Activated T-helper 2 cell treated with anti-CD3 and anti-CD28 coated beads, Interferon-gamma antibody, Interleukin-2, Interleukin-4, amounts not matched to agents 10 μg/mL and 5 μg/mL and 100 μg/mL, durations not matched to agents 14 hours and 24 hours and 36 hours (primary cell): ENCODE measurements at regions of chr20 and their contacts with region 1.

Region 1: GRCh38 chr20:3156811-3157619 is 2.6 kb downstream of the FASTKD5 start:
- DNase-seq: no peak
- H3K4me3 Mint-ChIP-seq: peak overlapping the region; percentile 76
- H3K27ac Mint-ChIP-seq: peak overlapping the region; percentile 85
- H3K4me1 Mint-ChIP-seq: peaks cover 37% of the 10 kb centered on the region
- H3K27me3 Mint-ChIP-seq: no peaks in the 10 kb centered on the region

Region 2: DNA sequence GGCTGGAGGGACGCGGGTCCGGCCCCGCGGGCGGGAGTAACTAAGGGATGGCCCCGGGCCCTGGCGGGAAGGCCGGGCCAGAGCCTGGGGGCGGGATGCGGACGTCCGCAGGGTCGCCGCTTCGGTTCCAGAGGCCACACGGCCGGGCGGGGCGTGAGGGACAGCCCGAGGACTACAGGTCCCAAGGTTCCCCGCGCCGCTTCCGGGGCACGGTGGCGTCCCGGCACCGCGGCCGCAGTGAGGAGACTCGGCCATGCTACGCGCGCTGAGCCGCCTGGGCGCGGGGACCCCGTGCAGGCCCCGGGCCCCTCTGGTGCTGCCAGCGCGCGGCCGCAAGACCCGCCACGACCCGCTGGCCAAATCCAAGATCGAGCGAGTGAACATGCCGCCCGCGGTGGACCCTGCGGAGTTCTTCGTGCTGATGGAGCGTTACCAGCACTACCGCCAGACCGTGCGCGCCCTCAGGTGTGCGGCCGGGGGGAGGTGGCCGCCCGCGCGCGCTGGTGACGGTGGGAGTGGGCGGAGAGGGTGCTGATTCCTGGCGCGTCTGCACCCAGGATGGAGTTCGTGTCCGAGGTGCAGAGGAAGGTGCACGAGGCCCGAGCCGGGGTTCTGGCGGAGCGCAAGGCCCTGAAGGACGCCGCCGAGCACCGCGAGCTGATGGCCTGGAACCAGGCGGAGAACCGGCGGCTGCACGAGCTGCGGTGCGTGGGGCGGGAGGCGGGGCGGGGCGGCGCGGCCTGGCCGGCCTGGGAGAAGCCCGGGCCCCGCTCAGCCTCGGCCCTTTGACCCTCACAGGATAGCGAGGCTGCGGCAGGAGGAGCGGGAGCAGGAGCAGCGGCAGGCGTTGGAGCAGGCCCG is 111.0 kb before region 1 on chr20 and contains the start of gene MRPS26:
- intact Hi-C with region 1: loop called (anchors 5 kb)
- DNase-seq: peak; percentile 81
- H3K4me3 Mint-ChIP-seq: peak within 1 kb of the TSS; percentile 86
- H3K27ac Mint-ChIP-seq: peak within 1 kb of the TSS; percentile 81
- H3K4me1 Mint-ChIP-seq: peaks cover 13% of the 10 kb centered on the region
- H3K27me3 Mint-ChIP-seq: no peaks in the 10 kb centered on the region
- total RNA-seq, gene MRPS26: 143 and 148 TPM in 2 replicates

Region 3: GRCh38 chr20:3121271-3121911 is 35.6 kb before region 1 on chr20:
- intact Hi-C with region 1: loop called (anchors 5 kb)
- DNase-seq: no peak
- H3K4me3 Mint-ChIP-seq: peak overlapping the region; percentile 9
- H3K27ac Mint-ChIP-seq: peak overlapping the region; percentile 52
- H3K4me1 Mint-ChIP-seq: peaks cover 22% of the 10 kb centered on the region
- H3K27me3 Mint-ChIP-seq: no peaks in the 10 kb centered on the region

Region 4: GRCh38 chr20:3173610-3174441 is 16.8 kb after region 1 on chr20:
- intact Hi-C with region 1: loop called (anchors 1 kb)
- DNase-seq: peak; percentile 82
- H3K4me3 Mint-ChIP-seq: peak overlapping the region; percentile 82
- H3K27ac Mint-ChIP-seq: no peak overlapping the region
- H3K4me1 Mint-ChIP-seq: peaks cover 8% of the 10 kb centered on the region
- H3K27me3 Mint-ChIP-seq: peaks cover 54% of the 10 kb centered on the region

Region 5: GRCh38 chr20:3209257-3209945 is 52.4 kb after region 1 on chr20 and contains the start of gene ITPA:
- intact Hi-C with region 1: loop called (anchors 2 kb)
- DNase-seq: peak; percentile 50
- H3K4me3 Mint-ChIP-seq: peak within 1 kb of the TSS; percentile 96
- H3K27ac Mint-ChIP-seq: peak within 1 kb of the TSS; percentile 87
- H3K4me1 Mint-ChIP-seq: peaks cover 10% of the 10 kb centered on the region
- H3K27me3 Mint-ChIP-seq: no peaks in the 10 kb centered on the region
- total RNA-seq, gene ITPA: 84.5 and 87.8 TPM in 2 replicates